SK-N-SH (cell line): ENCODE measurements at regions of chr16 and their contacts with region 1.

Region 1: DNA sequence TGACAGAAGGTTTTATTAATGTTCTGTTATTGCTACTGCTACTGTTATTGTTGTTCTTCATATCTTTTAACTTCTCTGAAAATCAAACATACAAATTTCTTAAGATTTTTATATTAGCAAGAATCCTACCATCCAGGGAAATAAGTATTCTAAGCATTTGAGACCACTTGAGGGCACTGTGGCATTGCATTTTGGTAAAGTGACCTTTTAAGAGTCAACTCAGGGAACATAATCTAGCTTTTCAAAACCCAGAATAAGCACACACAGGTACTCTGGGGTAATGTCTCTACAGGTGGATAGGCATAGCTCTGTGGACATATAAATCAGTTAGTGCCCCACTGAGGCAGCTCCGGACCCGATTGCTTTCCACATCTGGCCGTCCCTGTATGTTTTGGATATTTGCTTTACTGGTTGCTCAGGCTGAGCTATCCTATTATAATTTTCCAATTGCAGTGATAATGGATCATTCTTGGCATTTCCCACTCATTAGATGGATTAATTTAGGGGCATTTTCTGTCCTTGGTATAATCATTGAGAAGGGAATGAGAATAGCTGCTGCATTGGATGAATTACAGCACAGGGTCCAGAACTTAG is 1425.1 kb upstream of the CDH8 start:
- DNase-seq: peak; percentile 18
- H3K4me3 ChIP-seq: no peak overlapping the region; a peak in 1 of 4 replicates
- H3K27ac ChIP-seq: no peak overlapping the region
- H3K4me1 ChIP-seq: no peaks in the 10 kb centered on the region
- H3K27me3 ChIP-seq: no peaks in the 10 kb centered on the region
- CTCF ChIP-seq: peak; percentile 81
- EP300 ChIP-seq: no peak
- RAD21 ChIP-seq: peak; percentile 93

Region 2: DNA sequence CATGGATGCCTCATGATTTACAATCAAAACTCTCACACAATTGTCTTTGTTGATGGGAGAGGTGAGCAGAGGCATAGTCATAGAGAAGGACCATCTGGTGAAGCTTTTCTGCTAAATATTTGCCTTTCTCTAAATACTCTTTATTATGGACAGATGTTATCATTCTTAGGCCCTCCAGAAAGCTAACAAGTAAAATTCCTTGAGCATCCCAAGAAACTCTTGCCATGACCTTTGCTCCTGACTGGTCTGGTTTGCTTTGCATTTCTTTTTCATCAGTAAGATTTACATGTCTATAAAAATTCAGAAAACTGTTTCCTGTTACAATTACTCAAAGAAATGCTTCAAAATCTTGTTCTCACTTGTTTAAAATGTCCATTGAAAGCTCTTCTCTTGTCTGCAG is 88.5 kb before region 1 on chr16:
- CTCF ChIA-PET with region 1: no interaction called
- POLR2A ChIA-PET with region 1: no interaction called
- DNase-seq: no peak
- H3K4me3 ChIP-seq: no peak overlapping the region
- H3K27ac ChIP-seq: no peak overlapping the region
- H3K4me1 ChIP-seq: no peaks in the 10 kb centered on the region
- H3K27me3 ChIP-seq: no peaks in the 10 kb centered on the region
- CTCF ChIP-seq: no peak
- EP300 ChIP-seq: no peak
- RAD21 ChIP-seq: no peak

Region 3: DNA sequence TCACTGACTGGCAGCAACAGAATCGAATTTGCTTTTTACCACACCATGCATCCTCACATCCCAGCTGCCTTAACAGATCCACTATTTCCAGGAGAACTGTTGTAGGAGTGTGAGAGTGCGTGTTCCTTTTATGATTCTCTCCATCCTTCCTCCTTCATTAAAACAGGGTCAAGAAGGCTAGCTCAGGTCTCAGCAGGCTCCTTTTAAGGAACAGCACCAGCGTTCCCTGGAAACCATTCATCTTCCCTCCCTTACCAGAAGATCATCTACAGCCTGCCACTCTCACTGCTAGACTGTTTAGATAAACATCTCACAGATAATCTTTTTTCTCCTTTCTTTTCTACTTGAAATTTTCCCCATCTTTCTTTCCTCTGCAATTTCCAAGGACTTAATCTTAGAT is 106.8 kb after region 1 on chr16:
- CTCF ChIA-PET with region 1: no interaction called
- POLR2A ChIA-PET with region 1: no interaction called
- DNase-seq: no peak
- H3K4me3 ChIP-seq: no peak overlapping the region
- H3K27ac ChIP-seq: no peak overlapping the region
- H3K4me1 ChIP-seq: peaks cover 0 to 3% of the 10 kb centered on the region in 2 experiments; a peak in 2 of 4 replicates
- H3K27me3 ChIP-seq: no peaks in the 10 kb centered on the region
- CTCF ChIP-seq: no peak
- EP300 ChIP-seq: no peak
- RAD21 ChIP-seq: no peak

Region 4: DNA sequence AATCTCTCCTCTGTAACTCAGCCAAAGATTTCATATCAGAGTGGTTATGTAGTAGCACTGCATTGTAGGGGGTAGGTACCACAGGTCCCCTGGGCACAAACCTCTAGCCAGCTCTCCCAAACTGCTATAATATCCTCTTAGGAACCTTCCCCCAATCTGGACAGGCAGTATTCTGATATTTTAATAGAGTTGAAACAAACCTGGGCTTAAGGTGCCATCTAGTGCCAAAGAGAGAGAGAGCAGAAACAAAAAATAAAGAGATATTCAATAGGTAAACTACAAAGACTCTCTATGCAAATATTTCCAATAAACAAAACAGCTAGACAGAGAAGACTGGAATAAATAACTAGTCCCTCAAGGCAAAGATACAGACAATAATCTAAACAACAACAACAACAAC is 590.5 kb after region 1 on chr16:
- CTCF ChIA-PET with region 1: interaction called, 32 read pairs
- POLR2A ChIA-PET with region 1: no interaction called
- DNase-seq: no peak
- H3K4me3 ChIP-seq: no peak overlapping the region
- H3K27ac ChIP-seq: no peak overlapping the region
- H3K4me1 ChIP-seq: no peaks in the 10 kb centered on the region; a peak in 1 of 4 replicates
- H3K27me3 ChIP-seq: no peaks in the 10 kb centered on the region
- CTCF ChIP-seq: peak; percentile 66
- EP300 ChIP-seq: no peak
- RAD21 ChIP-seq: peak; percentile 76

Region 5: GRCh38 chr16:65117811-65118448 is 1656.6 kb after region 1 on chr16:
- CTCF ChIA-PET with region 1: interaction called, 22 read pairs
- POLR2A ChIA-PET with region 1: no interaction called
- DNase-seq: peak; percentile 65
- H3K4me3 ChIP-seq: peak overlapping the region in 1 of 2 experiments; percentile 90; a peak in 2 of 4 replicates
- H3K27ac ChIP-seq: peak overlapping the region in 1 of 2 experiments; percentile 97; a peak in 3 of 4 replicates
- H3K4me1 ChIP-seq: peaks cover 24 to 41% of the 10 kb centered on the region in 2 experiments
- H3K27me3 ChIP-seq: no peaks in the 10 kb centered on the region
- CTCF ChIP-seq: peak; percentile 96
- EP300 ChIP-seq: peak in 1 of 2 experiments; percentile 13; a peak in 1 of 4 replicates
- RAD21 ChIP-seq: peak; percentile 98